Natural killer cell (primary cell): ENCODE measurements at regions of chr9 and their contacts with region 1.

Region 1: DNA sequence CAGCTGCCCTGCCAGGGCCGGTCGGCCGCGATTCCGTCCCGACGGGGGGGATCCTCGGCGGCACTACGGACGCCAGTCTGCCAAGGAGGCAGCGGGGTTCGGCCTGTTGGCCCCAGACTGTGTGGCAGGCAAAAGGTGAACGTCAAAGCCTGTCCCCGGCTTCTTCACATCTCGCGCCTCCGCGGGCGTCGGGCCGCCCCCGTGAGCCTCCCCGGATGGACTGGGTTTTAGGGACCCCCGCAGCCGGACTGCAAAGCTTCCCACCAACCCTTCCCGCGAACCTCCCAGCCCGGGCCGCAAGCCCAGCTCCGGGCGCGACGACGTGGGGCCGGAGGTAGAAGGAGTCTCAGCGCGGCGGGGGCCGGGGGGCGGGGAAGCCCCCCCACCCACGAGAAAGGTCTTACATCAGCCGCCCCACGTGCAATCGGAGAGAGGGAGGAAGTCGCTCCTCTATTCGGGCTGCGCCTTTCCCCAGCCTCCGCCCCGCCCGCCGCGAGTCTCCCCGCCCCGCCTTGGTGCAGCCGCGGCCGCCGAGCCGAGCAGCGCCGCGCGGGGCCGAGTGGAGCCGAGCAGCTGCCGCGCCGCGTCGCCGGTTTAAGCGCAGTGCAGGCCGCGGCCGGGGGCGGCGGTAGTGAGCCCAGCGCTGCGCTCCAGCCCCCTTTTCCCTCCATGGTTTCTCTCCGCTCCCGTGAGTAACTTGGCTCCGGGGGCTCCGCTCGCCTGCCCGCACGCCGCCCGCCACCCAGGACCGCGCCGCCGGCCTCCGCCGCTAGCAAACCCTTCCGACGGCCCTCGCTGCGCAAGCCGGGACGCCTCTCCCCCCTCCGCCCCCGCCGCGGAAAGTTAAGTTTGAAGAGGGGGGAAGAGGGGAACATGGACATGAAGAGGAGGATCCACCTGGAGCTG is at the start of gene ANP32B:
- DNase-seq: peak; percentile 91 to 96
- ATAC-seq: peak; percentile 81 to 94 (median 81)
- H3K4me3 ChIP-seq: peak within 1 kb of the TSS; percentile 95
- H3K4me3 Mint-ChIP-seq: peak within 1 kb of the TSS; percentile 84
- H3K27ac ChIP-seq: peak within 1 kb of the TSS; percentile 95
- H3K27ac Mint-ChIP-seq: peak within 1 kb of the TSS; percentile 53 to 88
- H3K4me1 ChIP-seq: peaks cover 20% of the 10 kb centered on the region
- H3K4me1 Mint-ChIP-seq: peaks cover 11 to 32% of the 10 kb centered on the region in 2 donors
- H3K27me3 ChIP-seq: no peaks in the 10 kb centered on the region
- H3K27me3 Mint-ChIP-seq: no peaks in the 10 kb centered on the region
- CTCF ChIP-seq: peak; percentile 88
- total RNA-seq, gene ANP32B: 89.9 to 107 (median 100) TPM

Region 2: GRCh38 chr9:97938081-97938644 is 44.8 kb before region 1 on chr9 and contains the start of gene HEMGN:
- intact Hi-C with region 1: loop called (anchors 5 kb)
- DNase-seq: peak in 1 of 2 donors; percentile 79
- ATAC-seq: peak; percentile 90 to 95 (median 93)
- H3K4me3 ChIP-seq: no peak within 1 kb of the TSS
- H3K4me3 Mint-ChIP-seq: peak within 1 kb of the TSS; percentile 69
- H3K27ac ChIP-seq: peak within 1 kb of the TSS; percentile 62
- H3K27ac Mint-ChIP-seq: peak within 1 kb of the TSS; percentile 82 to 92
- H3K4me1 ChIP-seq: peaks cover 4% of the 10 kb centered on the region
- H3K4me1 Mint-ChIP-seq: peaks cover 14 to 15% of the 10 kb centered on the region in 2 donors
- H3K27me3 ChIP-seq: no peaks in the 10 kb centered on the region
- H3K27me3 Mint-ChIP-seq: no peaks in the 10 kb centered on the region
- CTCF ChIP-seq: no peak
- total RNA-seq, gene HEMGN: 0.47 to 0.75 (median 0.75) TPM

Region 3: DNA sequence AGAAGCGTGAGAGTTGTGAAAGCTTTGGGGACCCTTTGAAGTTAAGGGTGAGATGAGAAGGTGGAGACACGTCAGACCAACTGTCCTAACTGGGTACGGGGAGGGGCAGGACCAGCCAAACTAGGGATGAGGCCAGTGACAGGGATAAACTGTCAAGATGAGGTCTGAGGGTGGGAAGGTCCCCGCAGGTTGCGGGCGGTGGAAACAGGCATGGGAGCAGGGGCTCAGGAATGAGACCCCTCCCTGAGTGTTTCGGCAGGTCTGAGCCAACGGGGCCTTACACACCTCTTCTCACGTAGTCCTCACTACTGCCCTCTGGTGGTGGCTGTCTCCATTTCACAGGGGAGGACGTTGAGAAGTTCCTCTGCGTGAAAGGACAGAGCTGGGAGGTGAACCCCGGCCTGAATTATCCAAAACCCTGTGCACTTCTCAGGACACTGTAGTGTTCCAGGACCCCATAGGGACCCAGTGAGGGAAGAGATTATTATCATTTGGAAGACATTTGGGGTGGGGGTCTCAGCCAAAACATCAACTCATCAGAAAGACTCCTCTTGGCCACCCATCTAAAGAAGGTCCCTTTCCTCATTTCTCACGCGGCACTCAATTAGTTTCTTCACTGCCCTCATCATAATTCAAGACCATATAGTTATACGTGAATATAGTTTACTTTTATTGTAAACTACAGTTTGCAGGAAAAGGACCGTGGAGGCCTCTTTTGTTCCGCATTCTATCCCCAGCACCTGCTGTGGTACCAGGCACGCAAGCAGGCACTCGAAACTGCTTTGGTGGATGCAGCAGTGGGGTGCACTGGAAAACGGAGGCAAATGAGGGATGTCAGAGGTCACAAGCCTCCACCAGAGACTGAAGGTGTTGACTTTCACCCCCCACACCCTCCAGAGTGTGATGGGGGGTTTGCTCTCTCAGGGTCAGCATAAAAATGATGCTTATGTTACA is 51.9 kb after region 1 on chr9:
- intact Hi-C with region 1: loop called (anchors 5 kb)
- DNase-seq: peak; percentile 82 to 97
- ATAC-seq: peak; percentile 96 to 100 (median 100)
- H3K4me3 ChIP-seq: no peak overlapping the region
- H3K4me3 Mint-ChIP-seq: no peak overlapping the region
- H3K27ac ChIP-seq: no peak overlapping the region
- H3K27ac Mint-ChIP-seq: peak overlapping the region in 1 of 2 donors; percentile 42
- H3K4me1 ChIP-seq: peaks cover 4% of the 10 kb centered on the region
- H3K4me1 Mint-ChIP-seq: peaks cover 7 to 9% of the 10 kb centered on the region in 2 donors
- H3K27me3 ChIP-seq: no peaks in the 10 kb centered on the region
- H3K27me3 Mint-ChIP-seq: peaks cover 0 to 5% of the 10 kb centered on the region in 2 donors
- CTCF ChIP-seq: peak; percentile 78

Region 4: DNA sequence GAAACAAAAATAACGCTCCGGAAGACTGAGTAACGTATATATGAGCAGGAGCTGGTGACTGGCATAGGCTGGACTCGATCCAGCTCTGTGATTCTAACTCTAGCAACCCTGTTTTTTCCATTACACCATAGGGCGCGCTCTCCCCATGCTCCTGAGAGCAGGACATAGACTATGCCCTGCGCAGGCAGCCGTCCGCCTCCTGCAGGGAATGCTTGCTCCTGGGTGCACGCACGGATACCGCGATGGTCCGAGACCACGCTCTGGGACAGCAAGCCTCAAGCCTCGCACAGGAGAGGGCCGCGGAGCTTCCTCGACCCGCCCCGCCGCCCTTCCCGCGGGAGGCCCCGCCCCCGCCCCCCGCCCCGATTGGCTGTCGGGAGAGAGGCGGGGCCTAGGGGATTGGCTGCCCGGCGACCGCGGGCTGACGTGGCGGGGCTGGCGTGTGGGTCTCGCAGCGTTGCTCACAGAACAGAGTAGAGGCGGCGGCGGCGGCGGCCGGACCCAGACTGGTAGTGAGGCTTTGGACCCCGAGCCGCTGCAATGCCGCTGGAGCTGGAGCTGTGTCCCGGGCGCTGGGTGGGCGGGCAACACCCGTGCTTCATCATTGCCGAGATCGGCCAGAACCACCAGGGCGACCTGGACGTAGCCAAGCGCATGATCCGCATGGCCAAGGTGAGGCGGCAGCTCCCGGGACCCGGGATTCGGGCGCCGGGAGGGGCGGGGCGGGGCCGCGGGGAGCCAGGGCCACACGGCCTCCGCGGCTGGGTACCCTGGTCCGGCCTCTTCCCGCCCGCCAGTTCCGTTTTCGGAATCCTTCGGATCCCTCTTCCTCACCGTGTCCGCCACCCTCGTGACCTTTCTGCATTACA is 73.6 kb after region 1 on chr9 and contains the start of gene NANS:
- intact Hi-C with region 1: loop called (anchors 1 kb)
- DNase-seq: peak; percentile 90 to 93
- ATAC-seq: peak; percentile 97 to 99 (median 98)
- H3K4me3 ChIP-seq: peak within 1 kb of the TSS; percentile 60
- H3K4me3 Mint-ChIP-seq: peak within 1 kb of the TSS; percentile 98
- H3K27ac ChIP-seq: peak within 1 kb of the TSS; percentile 79
- H3K27ac Mint-ChIP-seq: peak within 1 kb of the TSS; percentile 93 to 95
- H3K4me1 ChIP-seq: peaks cover 15% of the 10 kb centered on the region
- H3K4me1 Mint-ChIP-seq: peaks cover 14 to 18% of the 10 kb centered on the region in 2 donors
- H3K27me3 ChIP-seq: no peaks in the 10 kb centered on the region
- H3K27me3 Mint-ChIP-seq: no peaks in the 10 kb centered on the region
- CTCF ChIP-seq: no peak
- total RNA-seq, gene NANS: 30.7 to 36.8 (median 34.1) TPM